ENCODE measurements at regions of chr7 and their contacts with region 1.

Region 1: GRCh38 chr7:143008007-143008901 is 18.7 kb downstream of the OR9A2 start:
- DNase-seq: peak; percentile 88
- H3K4me3 Mint-ChIP-seq: no peak overlapping the region
- H3K27ac Mint-ChIP-seq: no peak overlapping the region
- H3K4me1 Mint-ChIP-seq: peaks cover 5% of the 10 kb centered on the region
- H3K27me3 Mint-ChIP-seq: peaks cover 5% of the 10 kb centered on the region

Region 2: DNA sequence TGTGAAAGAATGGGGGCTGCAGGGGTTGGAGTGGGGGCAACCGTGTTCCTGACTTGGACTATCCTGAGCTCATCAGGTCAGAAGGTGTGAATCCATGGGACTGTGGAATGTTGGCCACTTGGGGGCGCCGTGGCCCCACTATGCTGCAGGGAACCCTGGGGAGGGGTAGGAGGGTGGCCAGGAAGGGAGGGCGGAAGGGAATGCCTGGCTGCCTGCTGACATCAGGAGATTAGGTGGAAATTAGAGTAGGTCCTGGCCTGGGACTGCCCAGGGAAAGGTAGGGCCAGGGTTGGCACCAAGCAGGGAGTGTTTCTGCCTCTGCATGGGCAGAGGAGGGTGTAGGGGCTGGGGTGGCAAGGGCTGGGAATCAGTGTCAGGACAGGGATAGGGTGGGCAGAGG is 684.5 kb before region 1 on chr7:
- CTCF ChIA-PET with region 1: interaction called, 13 read pairs
- POLR2A ChIA-PET with region 1: no interaction called
- intact Hi-C with region 1: loop called (anchors 5 kb)
- DNase-seq: peak; percentile 75
- H3K4me3 Mint-ChIP-seq: peak overlapping the region; percentile 35
- H3K27ac Mint-ChIP-seq: peak overlapping the region; percentile 43
- H3K4me1 Mint-ChIP-seq: peaks cover 33% of the 10 kb centered on the region
- H3K27me3 Mint-ChIP-seq: peaks cover 6% of the 10 kb centered on the region

Region 3: GRCh38 chr7:142603870-142604448 is 404.3 kb before region 1 on chr7:
- CTCF ChIA-PET with region 1: interaction called, 12 read pairs
- POLR2A ChIA-PET with region 1: no interaction called
- intact Hi-C with region 1: loop called (anchors 1 kb)
- DNase-seq: peak; percentile 58
- H3K4me3 Mint-ChIP-seq: peak overlapping the region; percentile 35
- H3K27ac Mint-ChIP-seq: no peak overlapping the region
- H3K4me1 Mint-ChIP-seq: peaks cover 3% of the 10 kb centered on the region
- H3K27me3 Mint-ChIP-seq: no peaks in the 10 kb centered on the region

Region 4: DNA sequence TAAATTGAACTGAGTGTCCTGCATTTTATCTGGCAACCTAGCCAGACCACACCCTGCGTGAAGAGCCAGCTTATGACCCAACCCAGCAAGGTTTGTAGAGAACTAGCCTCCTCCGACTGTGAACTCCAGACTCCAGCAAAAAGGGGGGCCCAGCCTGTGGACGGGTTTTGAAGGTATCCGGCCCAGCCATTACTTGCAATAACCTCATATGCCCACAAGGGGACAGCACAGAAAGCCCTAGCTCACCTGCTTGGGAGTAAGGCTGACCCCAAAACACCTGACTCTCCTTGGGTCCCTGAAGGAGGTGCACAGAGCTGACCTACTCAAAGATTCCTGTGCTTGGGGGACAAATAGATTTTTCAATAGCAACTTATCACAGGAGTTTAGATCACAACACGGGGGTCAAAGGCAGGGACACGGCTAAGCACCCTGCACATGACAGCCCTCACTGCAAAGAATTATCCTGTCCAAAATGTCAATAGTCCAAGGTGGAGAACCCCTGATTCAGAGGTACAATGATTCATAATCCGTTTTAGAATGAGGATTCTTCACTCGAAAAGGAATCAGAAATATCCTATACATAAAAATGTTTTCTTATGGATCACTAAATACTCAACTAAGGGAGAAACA is 127.3 kb before region 1 on chr7:
- CTCF ChIA-PET with region 1: interaction called, 35 read pairs
- POLR2A ChIA-PET with region 1: no interaction called
- intact Hi-C with region 1: loop called (anchors 1 kb)
- DNase-seq: peak; percentile 59
- H3K4me3 Mint-ChIP-seq: no peak overlapping the region
- H3K27ac Mint-ChIP-seq: no peak overlapping the region
- H3K4me1 Mint-ChIP-seq: no peaks in the 10 kb centered on the region
- H3K27me3 Mint-ChIP-seq: peaks cover 2% of the 10 kb centered on the region

Region 5: DNA sequence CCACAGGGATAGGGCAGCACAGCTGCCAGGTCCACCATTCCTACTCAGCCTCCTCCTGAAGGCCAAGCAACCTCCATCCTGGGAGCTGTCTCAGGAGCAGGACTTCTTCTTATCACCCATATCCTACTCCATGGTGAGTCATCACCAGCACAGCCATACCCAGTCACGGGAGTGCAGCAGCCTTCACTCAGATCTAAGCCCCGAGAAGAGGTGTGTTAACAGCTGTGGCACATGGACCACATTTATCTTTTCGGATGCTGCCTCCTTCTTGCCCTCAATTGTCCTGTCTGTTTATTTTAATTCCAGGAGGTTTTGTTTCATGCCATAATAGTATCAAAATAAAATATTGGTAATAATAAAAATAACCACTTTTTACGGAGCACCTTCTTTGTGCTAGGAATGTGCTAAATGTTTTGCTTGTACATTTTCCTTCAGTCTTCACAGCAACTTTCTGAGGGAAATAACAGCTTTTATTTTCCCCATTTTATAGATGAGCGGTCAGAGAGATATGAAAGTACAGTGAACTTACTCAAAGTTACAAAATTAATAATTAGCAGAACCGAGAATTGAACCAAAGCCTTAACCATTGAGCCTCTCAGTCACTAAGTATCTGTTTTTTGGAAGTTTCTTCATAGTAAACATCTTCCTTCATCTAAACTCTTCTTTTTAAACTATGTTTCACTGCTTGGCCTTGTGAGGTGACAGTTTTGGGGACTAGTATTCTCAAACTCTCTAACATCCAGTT is 43.6 kb before region 1 on chr7:
- CTCF ChIA-PET with region 1: no interaction called
- POLR2A ChIA-PET with region 1: no interaction called
- intact Hi-C with region 1: no loop called
- DNase-seq: no peak
- H3K4me3 Mint-ChIP-seq: no peak overlapping the region
- H3K27ac Mint-ChIP-seq: no peak overlapping the region
- H3K4me1 Mint-ChIP-seq: no peaks in the 10 kb centered on the region
- H3K27me3 Mint-ChIP-seq: peaks cover 24% of the 10 kb centered on the region

Region 6: DNA sequence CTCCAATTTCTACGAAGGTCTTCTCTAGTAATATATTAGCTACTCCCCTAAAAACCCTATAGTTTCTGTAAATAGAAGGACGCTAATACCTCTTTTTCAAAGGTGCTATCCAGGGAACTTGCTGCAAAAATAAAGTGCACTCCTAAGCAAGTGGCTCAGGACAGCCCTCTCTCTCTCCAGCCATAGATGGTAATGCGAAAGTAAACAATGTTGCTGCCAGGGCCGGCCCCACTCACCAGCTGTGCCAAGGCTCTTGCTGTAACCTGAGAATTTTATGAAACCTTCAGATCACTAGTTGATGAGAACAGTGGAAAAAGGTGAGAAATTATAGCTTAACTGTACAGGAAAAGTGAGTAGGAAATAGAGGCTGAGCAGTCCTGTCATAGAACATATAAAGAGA is 164.1 kb after region 1 on chr7:
- CTCF ChIA-PET with region 1: no interaction called
- POLR2A ChIA-PET with region 1: no interaction called
- intact Hi-C with region 1: no loop called
- DNase-seq: no peak
- H3K4me3 Mint-ChIP-seq: no peak overlapping the region
- H3K27ac Mint-ChIP-seq: no peak overlapping the region
- H3K4me1 Mint-ChIP-seq: no peaks in the 10 kb centered on the region
- H3K27me3 Mint-ChIP-seq: peaks cover 16% of the 10 kb centered on the region

Region 7: DNA sequence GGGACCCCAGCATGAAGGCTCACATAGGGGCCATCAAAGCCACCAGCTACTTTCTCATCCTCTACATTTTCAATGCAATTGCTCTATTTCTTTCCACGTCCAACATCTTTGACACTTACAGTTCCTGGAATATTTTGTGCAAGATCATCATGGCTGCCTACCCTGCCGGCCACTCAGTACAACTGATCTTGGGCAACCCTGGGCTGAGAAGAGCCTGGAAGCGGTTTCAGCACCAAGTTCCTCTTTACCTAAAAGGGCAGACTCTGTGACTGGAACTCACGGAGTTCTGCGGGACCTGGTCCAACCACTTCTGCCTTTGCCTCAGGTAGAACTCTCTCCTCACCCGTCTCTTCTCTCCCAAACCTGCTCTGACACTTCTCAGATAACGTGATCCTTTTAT is 214.5 kb after region 1 on chr7:
- CTCF ChIA-PET with region 1: interaction called, 402 read pairs
- POLR2A ChIA-PET with region 1: no interaction called
- intact Hi-C with region 1: no loop called
- DNase-seq: no peak
- H3K4me3 Mint-ChIP-seq: no peak overlapping the region
- H3K27ac Mint-ChIP-seq: no peak overlapping the region
- H3K4me1 Mint-ChIP-seq: no peaks in the 10 kb centered on the region
- H3K27me3 Mint-ChIP-seq: peaks cover 13% of the 10 kb centered on the region

Measured in activated CD4-positive, alpha-beta memory T cell treated with anti-CD3 and anti-CD28 coated beads for 36 hours (primary cell).